ENCODE measurements at regions of chr1 and their contacts with region 1.

Region 1: DNA sequence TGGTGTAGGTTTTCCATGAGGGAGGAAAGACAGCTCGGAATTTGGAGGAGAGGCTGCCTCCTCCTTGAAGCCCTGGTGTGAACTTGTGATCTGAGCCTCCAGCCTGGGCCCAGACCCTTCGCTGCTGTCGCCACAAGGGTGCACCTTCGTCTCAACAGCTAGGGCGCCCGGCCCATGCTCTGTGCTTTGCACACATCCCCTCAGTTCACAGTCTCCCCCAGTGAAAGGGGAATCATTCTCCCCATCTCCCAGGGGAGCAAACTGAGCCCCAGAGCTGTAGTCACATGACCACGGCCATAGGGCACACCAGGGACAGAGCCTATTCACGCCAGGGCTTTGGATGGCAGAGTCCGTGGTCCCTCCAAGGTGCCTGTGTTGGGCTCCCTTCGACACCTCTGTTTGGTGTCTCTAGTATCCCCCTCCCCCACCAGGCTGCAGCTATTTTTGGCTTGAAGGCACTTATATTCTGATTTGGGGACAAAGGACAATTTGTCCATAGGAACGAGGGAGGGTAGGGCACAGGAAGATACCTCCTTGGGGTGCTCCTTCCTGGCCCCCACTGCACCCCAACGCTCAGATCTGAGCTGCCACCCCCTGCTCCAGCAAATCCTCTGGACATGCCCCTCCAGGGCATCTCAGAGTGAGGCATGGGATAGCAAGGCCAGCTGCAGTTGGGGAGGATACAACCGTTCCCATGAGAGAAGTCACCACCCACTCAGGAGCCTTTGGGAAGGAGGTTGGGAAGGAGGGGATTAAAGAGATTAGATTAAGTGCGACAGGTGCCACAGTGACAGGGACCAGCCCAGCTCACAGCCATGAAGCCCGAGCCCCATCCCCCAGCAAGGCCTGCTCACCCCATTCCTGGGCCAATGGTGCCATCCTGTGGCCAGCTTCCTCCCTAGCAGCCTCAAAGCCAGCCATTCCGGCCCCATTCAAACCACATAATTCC is 15.7 kb downstream of the MATN1 start:
- DNase-seq: peak; percentile 78 to 88 (median 85)
- ATAC-seq: peak; percentile 77 to 80
- H3K4me3 ChIP-seq: no peak overlapping the region
- H3K27ac ChIP-seq: peak overlapping the region; percentile 84
- H3K4me1 ChIP-seq: no peaks in the 10 kb centered on the region
- H3K27me3 ChIP-seq: no peaks in the 10 kb centered on the region

Region 2: GRCh38 chr1:28886731-28887418 is 1820.8 kb before region 1 on chr1:
- intact Hi-C with region 1: loop called in 2 of 4 experiments (anchors 10 kb)
- DNase-seq: peak; percentile 82 to 94 (median 94)
- ATAC-seq: peak; percentile 85 to 88
- H3K4me3 ChIP-seq: peak overlapping the region; percentile 67
- H3K27ac ChIP-seq: peak overlapping the region; percentile 21
- H3K4me1 ChIP-seq: no peaks in the 10 kb centered on the region
- H3K27me3 ChIP-seq: no peaks in the 10 kb centered on the region

Region 3: DNA sequence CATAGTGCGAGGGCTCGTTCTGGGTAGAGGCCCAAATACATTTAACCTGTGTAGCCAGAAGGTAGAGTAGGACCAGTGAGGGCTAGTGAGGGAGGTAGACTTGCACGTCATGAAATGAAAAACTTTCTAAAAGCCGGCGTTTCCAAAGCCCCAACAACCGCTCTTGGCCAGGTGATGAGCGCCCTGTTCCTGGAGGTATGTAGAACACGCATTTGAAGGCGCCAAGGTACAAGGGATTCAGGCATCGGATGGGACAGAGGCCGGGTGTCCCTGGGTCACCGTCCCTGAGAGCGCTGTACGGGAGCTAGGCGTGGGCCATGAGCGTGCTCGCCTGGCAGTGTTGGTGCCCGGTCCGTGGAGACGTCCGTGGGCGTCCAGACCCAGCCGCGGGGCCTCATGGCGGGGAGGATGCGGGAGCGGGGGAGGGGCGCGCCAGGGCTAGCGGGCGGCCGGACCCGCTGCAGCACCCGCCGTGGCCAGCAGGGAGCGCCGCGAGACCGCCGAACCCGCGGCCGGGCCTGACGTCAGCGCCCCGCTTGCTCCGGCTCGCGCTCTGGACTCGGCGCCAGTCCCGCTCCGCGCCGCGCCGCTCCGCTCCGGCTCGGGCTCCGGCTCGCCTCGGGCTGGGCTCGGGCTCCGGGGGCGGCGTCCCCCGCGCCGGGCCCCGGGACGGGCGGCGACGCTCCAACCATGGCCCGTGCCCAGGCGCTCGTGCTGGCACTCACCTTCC is 1471.6 kb before region 1 on chr1 and contains the start of gene PTPRU:
- intact Hi-C with region 1: loop called (anchors 2 to 10 kb)
- DNase-seq: peak; percentile 78 to 92 (median 92)
- ATAC-seq: peak; percentile 77 to 80
- H3K4me3 ChIP-seq: peak within 1 kb of the TSS; percentile 65
- H3K27ac ChIP-seq: peak within 1 kb of the TSS; percentile 0
- H3K4me1 ChIP-seq: no peaks in the 10 kb centered on the region
- H3K27me3 ChIP-seq: no peaks in the 10 kb centered on the region
- total RNA-seq, gene PTPRU: 13.7 to 29.9 (median 22.9) TPM

Region 4: GRCh38 chr1:29793101-29793546 is 914.6 kb before region 1 on chr1:
- intact Hi-C with region 1: loop called in 1 of 4 experiments (anchors 10 kb)
- DNase-seq: peak; percentile 75 to 89 (median 85)
- ATAC-seq: peak; percentile 63 to 83
- H3K4me3 ChIP-seq: no peak overlapping the region
- H3K27ac ChIP-seq: no peak overlapping the region
- H3K4me1 ChIP-seq: no peaks in the 10 kb centered on the region
- H3K27me3 ChIP-seq: no peaks in the 10 kb centered on the region

Region 5: DNA sequence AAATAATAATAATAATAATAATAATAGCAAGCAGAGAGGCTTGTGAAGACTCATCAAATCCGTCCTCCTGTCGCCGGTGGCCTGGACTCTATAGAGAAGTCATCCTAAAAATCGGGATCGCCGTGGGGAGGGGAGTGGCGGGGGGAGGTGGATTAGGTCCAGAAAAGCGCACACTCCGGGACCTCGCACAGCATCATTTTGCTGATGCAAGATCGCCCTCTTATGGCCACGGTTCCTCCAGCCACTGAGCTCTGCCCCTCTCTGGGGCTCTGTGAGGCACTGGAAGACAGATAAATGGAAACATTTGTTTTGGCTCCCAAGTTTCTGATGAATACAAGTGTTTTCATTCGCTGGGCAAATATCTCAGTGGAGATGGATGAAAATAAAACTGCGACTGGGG is 596.3 kb before region 1 on chr1:
- intact Hi-C with region 1: loop called in 1 of 4 experiments (anchors 10 kb)
- DNase-seq: peak; percentile 55 to 71 (median 63)
- ATAC-seq: peak; percentile 65 to 77
- H3K4me3 ChIP-seq: no peak overlapping the region
- H3K27ac ChIP-seq: no peak overlapping the region
- H3K4me1 ChIP-seq: no peaks in the 10 kb centered on the region
- H3K27me3 ChIP-seq: no peaks in the 10 kb centered on the region

Region 6: GRCh38 chr1:30525971-30526651 is 181.6 kb before region 1 on chr1:
- intact Hi-C with region 1: loop called in 1 of 4 experiments (anchors 10 kb)
- DNase-seq: peak in 1 of 3 donors; percentile 69
- ATAC-seq: peak in 1 of 2 donors; percentile 42
- H3K4me3 ChIP-seq: no peak overlapping the region
- H3K27ac ChIP-seq: peak overlapping the region; percentile 65
- H3K4me1 ChIP-seq: peaks cover 12% of the 10 kb centered on the region
- H3K27me3 ChIP-seq: no peaks in the 10 kb centered on the region

Measured in right cardiac atrium (tissue), 5 donors.